ENCODE measurements at regions of chr6 and their contacts with region 1.

Region 1: DNA sequence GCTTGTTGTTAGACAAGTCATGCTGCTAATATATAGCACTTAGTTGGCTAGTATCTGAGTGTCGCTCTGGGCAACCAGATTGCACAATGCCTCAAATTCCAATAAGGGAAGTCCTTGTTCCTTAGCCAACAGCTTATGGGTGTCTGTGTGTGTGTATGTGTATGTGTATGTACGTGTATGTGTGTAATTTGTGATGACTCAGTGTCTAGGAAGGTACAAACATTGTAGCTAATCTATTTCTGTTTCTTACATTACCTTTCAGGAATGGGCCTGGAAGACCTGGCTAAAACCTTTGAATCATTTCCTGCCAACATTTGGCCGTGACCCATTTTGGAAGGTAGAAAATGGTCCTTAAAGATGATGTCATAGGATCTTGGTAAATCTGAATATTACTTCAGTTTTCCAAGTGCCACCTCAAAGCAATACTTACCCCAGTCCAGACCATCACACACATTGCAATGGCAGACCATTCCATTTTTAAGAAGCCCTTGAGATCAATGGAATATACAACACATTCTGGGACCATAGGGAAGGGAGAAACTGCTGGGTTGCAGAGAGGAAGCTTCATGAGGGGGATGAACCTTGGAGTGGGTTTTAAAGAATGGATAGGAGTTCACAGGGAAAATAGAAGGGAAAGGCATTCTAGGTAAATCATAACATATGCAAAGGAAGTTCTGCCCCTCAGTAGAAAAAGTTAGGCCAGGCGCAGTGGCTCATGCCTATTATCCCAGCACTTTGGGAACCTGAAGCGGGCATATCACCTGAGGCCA is 25.1 kb downstream of the NEDD9 start:
- H3K4me3 Mint-ChIP-seq: no peak overlapping the region
- H3K27ac Mint-ChIP-seq: peak overlapping the region; percentile 78
- H3K4me1 Mint-ChIP-seq: peaks cover 34% of the 10 kb centered on the region
- H3K27me3 Mint-ChIP-seq: peaks cover 11% of the 10 kb centered on the region

Region 2: DNA sequence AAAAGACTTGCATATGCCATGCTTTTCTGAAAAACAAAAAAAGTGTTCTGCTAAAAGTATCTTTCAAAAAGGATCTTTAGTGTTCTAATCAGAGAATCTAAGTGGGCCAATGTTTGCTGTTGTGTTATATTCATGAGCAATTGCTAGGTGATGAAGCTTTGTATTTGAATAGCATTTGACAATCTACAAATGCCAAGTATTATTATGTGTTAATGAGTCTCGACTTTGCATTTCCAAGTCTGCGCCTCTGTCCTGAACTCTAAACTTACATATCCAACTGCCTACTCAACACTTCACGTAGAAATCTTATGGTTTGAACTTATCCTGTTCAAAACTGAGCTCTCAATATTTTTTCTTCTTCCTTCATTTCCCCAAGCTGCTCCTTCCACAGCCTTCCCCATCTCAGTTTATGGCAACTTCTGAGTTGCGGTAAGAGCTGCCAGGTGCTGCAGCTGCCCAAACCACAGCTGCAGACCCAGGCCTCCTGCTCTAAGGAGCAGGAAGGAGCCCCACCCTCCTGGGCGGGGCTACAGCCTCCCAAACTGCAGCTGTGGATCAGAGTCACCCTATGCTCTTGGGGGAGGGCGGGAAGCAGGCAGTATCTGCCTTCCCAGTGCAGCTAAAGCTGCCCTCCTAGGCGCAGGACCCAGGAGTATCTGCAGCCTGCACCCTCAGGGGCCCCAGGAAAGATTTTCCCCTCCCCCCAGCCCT is 352.3 kb before region 1 on chr6:
- intact Hi-C with region 1: no loop called
- H3K4me3 Mint-ChIP-seq: no peak overlapping the region
- H3K27ac Mint-ChIP-seq: no peak overlapping the region
- H3K4me1 Mint-ChIP-seq: peaks cover 6% of the 10 kb centered on the region
- H3K27me3 Mint-ChIP-seq: peaks cover 23% of the 10 kb centered on the region

Region 3: GRCh38 chr6:10933126-10933525 is 274.3 kb before region 1 on chr6:
- intact Hi-C with region 1: no loop called
- H3K4me3 Mint-ChIP-seq: no peak overlapping the region
- H3K27ac Mint-ChIP-seq: no peak overlapping the region
- H3K4me1 Mint-ChIP-seq: no peaks in the 10 kb centered on the region
- H3K27me3 Mint-ChIP-seq: peaks cover 25% of the 10 kb centered on the region

Region 4: GRCh38 chr6:11172501-11173332 is 34.7 kb before region 1 on chr6:
- intact Hi-C with region 1: loop called (anchors 2 kb)
- H3K4me3 Mint-ChIP-seq: no peak overlapping the region
- H3K27ac Mint-ChIP-seq: no peak overlapping the region
- H3K4me1 Mint-ChIP-seq: peaks cover 18% of the 10 kb centered on the region
- H3K27me3 Mint-ChIP-seq: peaks cover 6% of the 10 kb centered on the region

Region 5: DNA sequence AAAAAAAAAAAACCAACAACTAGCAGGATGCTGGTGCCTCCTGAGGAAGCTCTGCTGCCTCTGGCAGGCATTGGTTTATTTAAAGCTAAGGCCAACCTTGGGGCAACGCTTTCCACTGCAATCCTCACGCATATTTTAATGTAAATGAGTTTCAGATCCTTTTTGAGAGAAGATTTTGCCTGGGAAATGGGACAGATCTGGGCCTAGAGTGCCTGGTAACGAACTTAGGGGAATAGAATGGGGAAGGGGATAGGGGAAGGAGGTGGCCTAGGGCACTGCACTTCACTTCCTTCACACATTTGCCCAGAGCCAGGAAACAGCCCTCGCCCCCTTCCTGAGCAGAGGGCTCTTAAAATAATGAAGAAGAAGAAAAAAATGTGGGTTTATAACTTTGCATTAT is 197.5 kb after region 1 on chr6:
- intact Hi-C with region 1: loop called (anchors 10 kb)
- H3K4me3 Mint-ChIP-seq: no peak overlapping the region
- H3K27ac Mint-ChIP-seq: peak overlapping the region; percentile 66
- H3K4me1 Mint-ChIP-seq: peaks cover 41% of the 10 kb centered on the region
- H3K27me3 Mint-ChIP-seq: peaks cover 24% of the 10 kb centered on the region

Region 6: DNA sequence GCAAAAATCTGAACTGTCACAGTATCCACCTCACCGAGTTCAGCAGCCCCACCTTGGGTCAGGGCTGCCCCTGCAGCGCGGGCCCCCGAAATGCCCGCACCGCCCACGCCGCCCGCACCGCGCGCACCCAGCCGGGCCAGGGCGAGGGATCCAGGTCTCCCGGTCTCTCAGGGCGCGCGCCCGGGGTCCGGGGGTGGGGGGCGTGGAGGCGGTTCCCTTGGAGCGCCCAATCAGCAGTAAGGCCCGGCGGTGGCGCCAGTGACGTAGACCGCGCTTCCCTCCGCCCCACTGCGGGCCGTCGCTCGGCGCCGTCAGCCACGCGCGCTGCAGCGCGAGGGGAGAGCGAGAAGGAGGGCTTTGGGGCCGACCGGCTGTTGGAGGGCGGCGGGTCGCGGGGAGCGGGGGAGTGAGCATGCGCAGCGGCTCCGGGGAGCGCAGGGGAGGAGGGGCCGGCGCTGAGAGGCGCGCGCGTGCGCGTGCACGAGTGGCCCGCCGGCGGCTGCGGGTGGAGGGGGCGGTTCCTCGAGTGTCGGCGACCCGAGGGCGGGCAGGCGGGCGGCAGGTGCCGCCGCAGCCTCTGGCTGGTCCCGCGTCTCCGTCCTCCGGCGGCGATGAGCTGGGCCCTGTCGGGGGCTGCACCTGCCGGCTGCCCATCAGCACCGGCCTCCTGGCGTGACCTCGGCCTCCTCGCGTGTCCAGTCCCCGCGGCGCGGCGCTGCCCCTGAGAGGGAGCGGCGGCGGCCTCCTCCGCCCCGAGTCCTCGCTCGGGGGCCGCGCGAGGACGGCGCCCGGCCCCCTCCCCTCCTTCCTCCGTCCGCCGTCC is 330.1 kb after region 1 on chr6 and contains the start of gene TMEM170B:
- intact Hi-C with region 1: loop called (anchors 2 kb)
- H3K4me3 Mint-ChIP-seq: peak within 1 kb of the TSS; percentile 84
- H3K27ac Mint-ChIP-seq: peak within 1 kb of the TSS; percentile 83
- H3K4me1 Mint-ChIP-seq: peaks cover 28% of the 10 kb centered on the region
- H3K27me3 Mint-ChIP-seq: no peaks in the 10 kb centered on the region

Measured in dendritic cell treated with granulocyte-macrophage colony-stimulating factor and Interleukin-4, amounts not matched to agents 40 ng/mL and 50 ng/mL, for 4 days (primary cell).